ENCODE measurements at regions of chr9 and their contacts with region 1.

Region 1: DNA sequence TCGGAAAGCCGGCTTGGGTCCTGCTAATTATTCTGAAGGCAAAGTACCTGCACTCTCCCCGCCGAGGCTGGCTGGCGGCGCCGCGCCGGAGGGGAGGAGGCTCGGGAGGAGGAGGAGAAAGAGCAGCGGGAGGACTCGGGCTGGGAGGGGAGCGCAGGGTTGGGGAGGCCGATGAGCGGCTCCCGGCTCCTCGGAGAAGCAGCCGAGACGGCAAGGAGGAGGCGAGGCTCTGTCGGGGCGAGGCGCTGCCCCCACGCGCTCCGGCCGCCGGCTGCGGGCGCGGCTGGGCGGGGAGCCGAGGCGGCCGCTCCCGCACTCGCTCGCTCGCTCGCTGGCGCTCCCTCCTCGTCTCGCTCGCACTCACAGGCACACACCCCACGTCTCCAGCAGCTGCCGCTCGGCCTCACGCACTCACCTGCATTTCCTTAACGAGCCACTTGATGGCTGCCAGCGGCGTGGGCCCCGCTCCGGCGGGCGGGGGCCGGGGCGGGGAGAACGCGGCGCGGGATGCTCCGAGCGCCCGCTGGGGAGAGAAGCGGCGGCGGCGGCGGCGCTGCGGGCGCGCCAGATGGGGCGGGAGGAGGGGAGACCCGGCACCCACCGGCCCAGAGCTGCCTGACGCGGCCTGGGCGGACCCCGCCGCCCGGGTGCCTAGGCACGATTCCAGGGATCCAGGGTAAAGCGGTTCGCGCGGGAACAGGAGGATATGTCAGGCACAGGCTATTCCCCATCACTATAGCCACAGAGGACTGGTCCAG is at the start of gene PTPRD:
- DNase-seq: peak; percentile 77
- ATAC-seq: peak; percentile 81
- H3K4me3 ChIP-seq: peak within 1 kb of the TSS; percentile 67
- H3K27ac ChIP-seq: no peak within 1 kb of the TSS
- H3K4me1 ChIP-seq: no peaks in the 10 kb centered on the region
- H3K27me3 ChIP-seq: peaks cover 12% of the 10 kb centered on the region
- CTCF ChIP-seq: no peak; the same call in 1 of the 2 replicates
- total RNA-seq, gene PTPRD: 0.63 TPM in 1 of 2 replicates, not detected in the other

Region 2: GRCh38 chr9:10274988-10275387 is 337.8 kb before region 1 on chr9:
- CTCF ChIA-PET with region 1: no interaction called
- POLR2A ChIA-PET with region 1: no interaction called
- intact Hi-C with region 1: loop called (anchors 5 kb)
- DNase-seq: no peak
- ATAC-seq: no peak
- H3K4me3 ChIP-seq: no peak overlapping the region
- H3K27ac ChIP-seq: no peak overlapping the region
- H3K4me1 ChIP-seq: no peaks in the 10 kb centered on the region
- H3K27me3 ChIP-seq: no peaks in the 10 kb centered on the region
- CTCF ChIP-seq: peak; percentile 35; the same call in 1 of the 2 replicates

Region 3: DNA sequence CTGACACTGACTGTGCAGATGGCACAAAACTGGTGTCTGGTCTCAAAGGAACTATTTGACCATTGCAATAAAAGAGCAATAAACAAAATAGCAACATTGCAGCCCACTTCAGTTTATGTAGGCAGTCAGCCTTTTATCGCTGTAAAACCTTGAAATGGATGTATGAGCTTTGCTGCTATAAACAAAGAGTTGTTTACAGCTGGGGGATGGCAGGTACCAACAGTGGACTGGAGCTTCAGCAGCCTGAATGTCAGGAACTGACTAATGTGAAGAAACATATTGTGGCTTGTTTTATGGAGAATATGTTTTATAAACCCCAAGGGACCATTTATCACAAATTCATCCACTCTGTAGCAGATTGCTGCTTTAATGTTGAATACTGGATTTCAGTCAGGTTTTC is 78.0 kb before region 1 on chr9:
- CTCF ChIA-PET with region 1: interaction called, 9 read pairs
- POLR2A ChIA-PET with region 1: interaction called, 3 read pairs
- intact Hi-C with region 1: loop called (anchors 2 kb)
- DNase-seq: peak; percentile 19
- ATAC-seq: peak; percentile 87
- H3K4me3 ChIP-seq: peak overlapping the region; percentile 23
- H3K27ac ChIP-seq: peak overlapping the region; percentile 89
- H3K4me1 ChIP-seq: peaks cover 14% of the 10 kb centered on the region
- H3K27me3 ChIP-seq: no peaks in the 10 kb centered on the region
- CTCF ChIP-seq: no peak

Region 4: GRCh38 chr9:10704720-10705119 is 91.9 kb after region 1 on chr9:
- CTCF ChIA-PET with region 1: no interaction called
- POLR2A ChIA-PET with region 1: no interaction called
- intact Hi-C with region 1: loop called (anchors 5 kb)
- DNase-seq: peak; percentile 58
- ATAC-seq: peak; percentile 80
- H3K4me3 ChIP-seq: no peak overlapping the region
- H3K27ac ChIP-seq: peak overlapping the region; percentile 72
- H3K4me1 ChIP-seq: peaks cover 11% of the 10 kb centered on the region; the same call in 1 of the 2 replicates
- H3K27me3 ChIP-seq: no peaks in the 10 kb centered on the region
- CTCF ChIP-seq: no peak

Region 5: GRCh38 chr9:10855852-10856251 is 243.0 kb after region 1 on chr9:
- CTCF ChIA-PET with region 1: no interaction called
- POLR2A ChIA-PET with region 1: no interaction called
- intact Hi-C with region 1: loop called (anchors 5 kb)
- DNase-seq: peak; percentile 14
- ATAC-seq: no peak
- H3K4me3 ChIP-seq: no peak overlapping the region
- H3K27ac ChIP-seq: no peak overlapping the region
- H3K4me1 ChIP-seq: no peaks in the 10 kb centered on the region
- H3K27me3 ChIP-seq: no peaks in the 10 kb centered on the region
- CTCF ChIP-seq: peak; percentile 56

Measured in PC-3 (cell line).